GM12878 (cell line): ENCODE measurements at regions of chr17 and their contacts with region 1.

Region 1: GRCh38 chr17:5111402-5112204 is at the start of gene ZNF232:
- DNase-seq: peak; percentile 84
- ATAC-seq: peak; percentile 94
- H3K4me3 ChIP-seq: peak within 1 kb of the TSS; percentile 69
- H3K27ac ChIP-seq: peak within 1 kb of the TSS; percentile 85
- H3K4me1 ChIP-seq: no peaks in the 10 kb centered on the region
- H3K27me3 ChIP-seq: peaks cover 0 to 3% of the 10 kb centered on the region in 2 experiments; a peak in 2 of 4 replicates
- CTCF ChIP-seq: no peak
- EP300 ChIP-seq: no peak
- POLR2A ChIP-seq: peak; percentile 88
- RAD21 ChIP-seq: no peak
- polyA plus RNA-seq, gene ZNF232: 12.8 to 14.3 TPM

Region 2: DNA sequence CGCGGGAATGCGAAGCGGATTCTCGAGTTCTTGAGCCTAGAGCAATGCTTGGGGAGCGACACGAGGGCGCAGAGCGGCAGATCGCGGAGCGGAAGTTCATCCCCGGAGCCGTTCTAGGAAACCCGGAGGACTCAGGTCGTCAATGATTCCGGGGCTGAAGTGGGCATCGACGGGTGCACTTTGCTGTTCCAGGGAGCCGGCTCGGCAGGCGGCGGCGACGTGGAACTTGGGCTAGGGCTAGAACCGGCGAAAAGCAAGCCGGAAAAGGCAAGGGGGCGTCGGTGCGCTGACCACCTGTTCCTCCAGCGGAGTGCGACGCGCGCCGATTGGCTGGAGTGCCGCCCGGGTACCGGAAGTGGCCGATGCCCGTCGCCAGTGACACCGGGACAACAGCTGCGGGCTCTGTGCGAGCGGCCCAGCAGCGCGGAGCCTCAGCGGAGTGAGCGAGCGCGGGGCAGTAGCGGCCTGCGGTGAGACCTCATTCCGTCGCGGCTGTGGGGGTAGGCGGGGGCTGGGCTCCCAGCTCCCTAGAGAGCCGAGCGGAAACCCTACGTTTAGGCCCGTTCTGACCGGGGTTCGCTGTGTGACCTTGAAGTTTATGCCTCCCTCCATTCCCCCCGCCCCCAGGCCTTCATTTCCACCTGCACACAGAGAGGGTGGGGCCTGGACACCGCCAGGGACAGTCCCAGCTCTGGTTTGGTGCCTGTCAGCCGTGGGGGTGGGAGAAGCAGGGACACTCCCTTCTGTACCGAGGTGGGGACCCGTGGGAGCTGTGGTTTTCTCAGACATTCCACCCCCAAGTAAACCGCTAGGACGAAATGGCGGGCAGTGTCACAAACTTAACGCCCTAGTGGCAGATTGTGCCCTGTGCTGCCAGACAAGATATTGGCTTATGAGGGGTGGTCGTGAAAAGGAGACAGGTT is 33.2 kb before region 1 on chr17 and contains the start of gene ZFP3:
- CTCF ChIA-PET with region 1: interaction called, 13 read pairs
- POLR2A ChIA-PET with region 1: interaction called, 7 read pairs
- RAD21 ChIA-PET with region 1: interaction called, 8 read pairs
- SMC1A ChIA-PET with region 1: interaction called, 15 read pairs
- in situ Hi-C with region 1: no loop called
- intact Hi-C with region 1: no loop called
- DNase-seq: peak; percentile 56
- ATAC-seq: peak; percentile 98
- H3K4me3 ChIP-seq: peak within 1 kb of the TSS; percentile 67
- H3K27ac ChIP-seq: peak within 1 kb of the TSS; percentile 66
- H3K4me1 ChIP-seq: peaks cover 3% of the 10 kb centered on the region
- H3K27me3 ChIP-seq: no peaks in the 10 kb centered on the region
- CTCF ChIP-seq: peak in 2 of 3 experiments; percentile 7 to 16; a peak in 1 of 6 replicates
- EP300 ChIP-seq: peak in 1 of 2 experiments; percentile 46; a peak in 1 of 4 replicates
- POLR2A ChIP-seq: peak; percentile 94
- RAD21 ChIP-seq: no peak
- polyA plus RNA-seq, gene ZFP3: 0.37 to 0.39 TPM

Region 3: DNA sequence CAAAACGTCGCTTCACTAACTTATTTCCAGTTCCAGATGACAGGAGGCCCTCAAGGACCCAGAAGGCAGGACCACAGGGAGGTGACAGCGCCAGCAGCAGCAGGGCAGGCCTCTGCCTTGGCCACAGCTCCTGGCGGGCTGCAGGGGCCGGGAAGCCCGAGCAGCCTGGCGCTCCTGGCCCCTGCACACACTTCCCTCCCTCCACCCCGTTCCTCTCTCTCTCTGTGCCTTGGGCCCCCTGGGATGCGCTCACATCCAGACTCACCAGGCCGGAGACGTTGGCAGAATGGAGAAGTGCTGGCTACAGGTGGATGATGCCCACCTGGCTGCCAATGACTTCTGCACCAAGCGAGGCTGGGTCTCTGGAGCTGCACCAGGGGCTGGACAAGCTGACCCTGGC is 67.4 kb after region 1 on chr17:
- CTCF ChIA-PET with region 1: no interaction called
- POLR2A ChIA-PET with region 1: no interaction called
- RAD21 ChIA-PET with region 1: no interaction called
- SMC1A ChIA-PET with region 1: no interaction called
- in situ Hi-C with region 1: no loop called
- intact Hi-C with region 1: loop called (anchors 5 kb)
- DNase-seq: no peak
- ATAC-seq: no peak
- H3K4me3 ChIP-seq: no peak overlapping the region
- H3K27ac ChIP-seq: no peak overlapping the region
- H3K4me1 ChIP-seq: no peaks in the 10 kb centered on the region
- H3K27me3 ChIP-seq: no peaks in the 10 kb centered on the region
- CTCF ChIP-seq: no peak
- EP300 ChIP-seq: no peak
- POLR2A ChIP-seq: no peak
- RAD21 ChIP-seq: no peak

Region 4: DNA sequence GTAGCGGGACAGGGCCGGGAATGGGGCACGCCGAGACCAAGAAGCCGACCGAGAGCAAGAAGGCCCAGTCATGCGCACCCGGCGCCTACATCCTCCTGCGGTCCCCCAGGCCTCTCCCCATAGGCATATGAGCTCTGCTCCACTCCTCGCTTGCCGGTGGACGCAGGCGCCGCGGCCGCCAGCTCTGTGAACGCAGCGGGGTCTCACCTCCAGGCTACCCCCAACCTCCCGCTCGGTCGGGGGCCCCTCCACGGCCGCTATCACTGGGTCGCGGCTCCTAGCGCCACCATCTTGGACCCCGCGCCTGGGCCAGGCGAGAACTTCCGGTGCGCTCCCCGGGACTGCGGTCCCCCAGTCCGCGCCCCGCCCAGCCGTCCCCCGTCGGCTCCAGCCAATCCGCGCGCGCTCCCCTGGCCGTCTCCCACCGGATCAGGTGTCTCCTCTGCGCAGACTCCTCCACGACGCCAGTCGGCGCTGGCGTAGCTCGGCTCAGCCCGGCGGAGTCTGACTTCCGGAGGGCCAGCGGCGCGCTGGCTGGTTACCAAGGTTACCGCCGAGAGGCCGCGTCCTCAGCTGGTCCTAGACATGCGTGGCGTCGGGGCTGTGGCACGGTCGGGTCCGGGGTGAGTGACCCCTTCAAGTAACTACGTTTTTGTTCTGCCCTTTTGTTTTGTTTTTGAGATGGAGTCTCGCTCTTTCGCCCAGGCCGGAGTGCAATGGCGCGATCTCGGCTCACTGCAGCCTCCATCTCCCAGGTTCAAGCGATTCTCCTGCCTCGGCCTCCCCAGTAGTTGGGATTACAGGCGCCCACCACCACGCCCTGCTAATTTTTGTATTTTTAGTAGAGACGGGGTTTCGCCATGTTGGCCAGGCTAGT is 80.2 kb after region 1 on chr17 and contains the start of gene ZNF594:
- CTCF ChIA-PET with region 1: interaction called, 12 read pairs
- POLR2A ChIA-PET with region 1: interaction called, 12 read pairs
- RAD21 ChIA-PET with region 1: interaction called, 6 read pairs
- SMC1A ChIA-PET with region 1: interaction called, 6 read pairs
- in situ Hi-C with region 1: no loop called
- intact Hi-C with region 1: no loop called
- DNase-seq: peak; percentile 81
- ATAC-seq: peak; percentile 100
- H3K4me3 ChIP-seq: peak within 1 kb of the TSS; percentile 68
- H3K27ac ChIP-seq: peak within 1 kb of the TSS; percentile 88
- H3K4me1 ChIP-seq: peaks cover 3% of the 10 kb centered on the region; the same call in 1 of the 2 replicates
- H3K27me3 ChIP-seq: no peaks in the 10 kb centered on the region
- CTCF ChIP-seq: peak; percentile 82 to 92 (median 83)
- EP300 ChIP-seq: 0 out of 4 replicates have a peak, but pooled peaks of 1 of the 2 experiments have one; percentile 14
- POLR2A ChIP-seq: peak; percentile 97
- RAD21 ChIP-seq: peak; percentile 50
- polyA plus RNA-seq, gene ZNF594: 0.98 to 1.7 TPM